Panc1 (cell line): ENCODE measurements at regions of chr2 and their contacts with region 1.

Region 1: GRCh38 chr2:193837111-193837737 is 1642.5 kb upstream of the TMEFF2 start:
- DNase-seq: no peak
- ATAC-seq: no peak
- H3K4me3 ChIP-seq: no peak overlapping the region
- H3K27ac ChIP-seq: no peak overlapping the region
- H3K4me1 ChIP-seq: no peaks in the 10 kb centered on the region
- H3K27me3 ChIP-seq: no peaks in the 10 kb centered on the region
- CTCF ChIP-seq: no peak

Region 2: GRCh38 chr2:193824474-193824873 is 12.8 kb before region 1 on chr2:
- CTCF ChIA-PET with region 1: no interaction called
- POLR2A ChIA-PET with region 1: no interaction called
- in situ Hi-C with region 1: no loop called
- intact Hi-C with region 1: loop called (anchors 1 kb)
- DNase-seq: no peak
- ATAC-seq: no peak
- H3K4me3 ChIP-seq: no peak overlapping the region
- H3K27ac ChIP-seq: no peak overlapping the region
- H3K4me1 ChIP-seq: no peaks in the 10 kb centered on the region
- H3K27me3 ChIP-seq: no peaks in the 10 kb centered on the region
- CTCF ChIP-seq: no peak

Region 3: GRCh38 chr2:193963472-193964119 is 126.4 kb after region 1 on chr2:
- CTCF ChIA-PET with region 1: no interaction called
- POLR2A ChIA-PET with region 1: no interaction called
- in situ Hi-C with region 1: no loop called
- intact Hi-C with region 1: no loop called
- DNase-seq: peak; percentile 12
- ATAC-seq: no peak
- H3K4me3 ChIP-seq: no peak overlapping the region
- H3K27ac ChIP-seq: no peak overlapping the region
- H3K4me1 ChIP-seq: no peaks in the 10 kb centered on the region; the same call in 1 of the 2 replicates
- H3K27me3 ChIP-seq: no peaks in the 10 kb centered on the region
- CTCF ChIP-seq: peak; percentile 54; the same call in 1 of the 2 replicates

Region 4: GRCh38 chr2:194271293-194271961 is 434.2 kb after region 1 on chr2:
- CTCF ChIA-PET with region 1: no interaction called
- POLR2A ChIA-PET with region 1: no interaction called
- in situ Hi-C with region 1: no loop called
- intact Hi-C with region 1: no loop called
- DNase-seq: no peak
- ATAC-seq: no peak
- H3K4me3 ChIP-seq: no peak overlapping the region
- H3K27ac ChIP-seq: no peak overlapping the region
- H3K4me1 ChIP-seq: no peaks in the 10 kb centered on the region
- H3K27me3 ChIP-seq: no peaks in the 10 kb centered on the region
- CTCF ChIP-seq: no peak

Region 5: DNA sequence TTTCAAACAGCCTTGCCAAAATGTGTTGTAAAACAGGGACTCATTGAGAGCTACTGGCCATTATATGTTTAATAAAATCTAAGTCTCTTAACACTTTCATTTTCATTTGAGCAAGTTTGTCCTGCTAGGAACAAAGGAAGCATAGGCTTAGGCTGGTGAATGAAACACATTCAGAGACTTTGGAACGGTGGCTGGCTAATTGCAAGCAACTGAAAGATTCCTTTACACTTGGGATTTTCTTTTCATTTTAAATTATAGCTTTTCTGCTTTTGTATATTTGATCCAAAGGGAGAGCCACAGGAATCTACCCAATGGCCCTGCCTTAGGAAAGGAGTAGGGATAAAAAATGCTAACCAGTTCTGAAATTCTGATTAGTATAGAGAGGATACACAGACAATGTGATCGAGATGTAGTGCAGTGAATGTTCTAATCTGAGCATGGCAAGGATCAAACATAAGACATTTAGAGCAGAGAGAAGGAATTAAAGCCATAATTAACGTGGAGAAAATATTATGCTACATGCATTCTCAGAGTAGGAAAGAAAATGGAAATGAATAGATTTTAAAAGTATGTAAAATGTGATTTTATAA is 908.4 kb after region 1 on chr2:
- CTCF ChIA-PET with region 1: no interaction called
- POLR2A ChIA-PET with region 1: no interaction called
- in situ Hi-C with region 1: no loop called
- intact Hi-C with region 1: no loop called
- DNase-seq: no peak
- ATAC-seq: no peak
- H3K4me3 ChIP-seq: no peak overlapping the region
- H3K27ac ChIP-seq: no peak overlapping the region
- H3K4me1 ChIP-seq: no peaks in the 10 kb centered on the region
- H3K27me3 ChIP-seq: no peaks in the 10 kb centered on the region
- CTCF ChIP-seq: no peak